ENCODE measurements at regions of chr1 and their contacts with region 1.

Region 1: GRCh38 chr1:196951711-196952394 is 8.3 kb downstream of the CFHR2 start:
- DNase-seq: no peak
- H3K4me3 Mint-ChIP-seq: no peak overlapping the region
- H3K27ac Mint-ChIP-seq: no peak overlapping the region
- H3K4me1 Mint-ChIP-seq: no peaks in the 10 kb centered on the region
- H3K27me3 Mint-ChIP-seq: no peaks in the 10 kb centered on the region

Region 2: GRCh38 chr1:196667131-196667530 is 284.7 kb before region 1 on chr1:
- intact Hi-C with region 1: no loop called
- DNase-seq: no peak
- H3K4me3 Mint-ChIP-seq: no peak overlapping the region
- H3K27ac Mint-ChIP-seq: no peak overlapping the region
- H3K4me1 Mint-ChIP-seq: no peaks in the 10 kb centered on the region
- H3K27me3 Mint-ChIP-seq: no peaks in the 10 kb centered on the region

Region 3: DNA sequence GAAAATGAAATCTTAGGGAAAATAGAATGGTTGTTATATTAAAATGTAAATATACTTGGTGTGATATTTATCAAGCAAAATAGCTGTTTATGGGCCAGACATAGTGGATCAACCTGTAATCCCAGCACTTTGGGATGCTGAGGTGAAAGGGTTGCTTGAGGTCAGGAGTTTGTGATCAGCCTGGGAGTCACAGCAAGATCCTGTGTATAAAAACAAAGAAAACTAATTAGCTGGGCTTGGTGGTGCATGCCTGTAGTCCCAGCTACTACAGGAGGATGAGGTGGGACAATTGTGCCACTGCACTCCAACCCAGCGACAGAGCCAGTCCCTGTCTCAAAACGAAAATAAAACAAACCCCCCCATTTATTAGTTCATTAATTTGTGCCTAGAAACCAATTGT is 154.0 kb before region 1 on chr1:
- intact Hi-C with region 1: loop called (anchors 10 kb)
- DNase-seq: no peak
- H3K4me3 Mint-ChIP-seq: no peak overlapping the region
- H3K27ac Mint-ChIP-seq: no peak overlapping the region
- H3K4me1 Mint-ChIP-seq: no peaks in the 10 kb centered on the region
- H3K27me3 Mint-ChIP-seq: no peaks in the 10 kb centered on the region

Region 4: GRCh38 chr1:196808529-196809235 is 143.2 kb before region 1 on chr1:
- intact Hi-C with region 1: loop called (anchors 10 kb)
- DNase-seq: no peak
- H3K4me3 Mint-ChIP-seq: no peak overlapping the region
- H3K27ac Mint-ChIP-seq: no peak overlapping the region
- H3K4me1 Mint-ChIP-seq: no peaks in the 10 kb centered on the region
- H3K27me3 Mint-ChIP-seq: no peaks in the 10 kb centered on the region

Region 5: DNA sequence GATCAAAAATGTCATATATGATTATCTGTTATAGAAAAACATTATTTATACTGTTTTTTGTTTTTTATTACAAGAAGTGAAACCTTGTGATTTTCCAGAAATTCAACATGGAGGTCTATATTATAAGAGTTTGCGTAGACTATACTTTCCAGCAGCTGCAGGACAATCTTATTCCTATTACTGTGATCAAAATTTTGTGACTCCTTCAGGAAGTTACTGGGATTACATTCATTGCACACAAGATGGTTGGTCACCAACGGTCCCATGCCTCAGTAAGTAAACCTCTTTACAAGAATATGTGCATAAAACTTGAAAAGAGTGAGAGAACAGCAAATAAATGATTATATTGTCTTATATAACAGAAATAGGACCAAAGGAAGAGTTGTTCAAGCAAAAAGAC is 49.5 kb before region 1 on chr1:
- intact Hi-C with region 1: no loop called
- DNase-seq: no peak
- H3K4me3 Mint-ChIP-seq: no peak overlapping the region
- H3K27ac Mint-ChIP-seq: no peak overlapping the region
- H3K4me1 Mint-ChIP-seq: no peaks in the 10 kb centered on the region
- H3K27me3 Mint-ChIP-seq: peaks cover 4% of the 10 kb centered on the region

Measured in activated T-helper 2 cell treated with anti-CD3 and anti-CD28 coated beads, Interferon-gamma antibody, Interleukin-2, Interleukin-4, amounts not matched to agents 10 μg/mL and 5 μg/mL and 100 μg/mL, durations not matched to agents 14 hours and 24 hours and 36 hours (primary cell).